ENCODE measurements at regions of chr1 and their contacts with region 1.

Region 1: GRCh38 chr1:24893431-24893830 is 36.6 kb downstream of the RUNX3 start:
- DNase-seq: peak in 1 of 2 donors; percentile 25
- H3K4me3 ChIP-seq: no peak overlapping the region
- H3K27ac ChIP-seq: no peak overlapping the region
- H3K4me1 ChIP-seq: no peaks in the 10 kb centered on the region
- H3K27me3 ChIP-seq: no peaks in the 10 kb centered on the region
- CTCF ChIP-seq: no peak
- POLR2A ChIP-seq: no peak

Region 2: DNA sequence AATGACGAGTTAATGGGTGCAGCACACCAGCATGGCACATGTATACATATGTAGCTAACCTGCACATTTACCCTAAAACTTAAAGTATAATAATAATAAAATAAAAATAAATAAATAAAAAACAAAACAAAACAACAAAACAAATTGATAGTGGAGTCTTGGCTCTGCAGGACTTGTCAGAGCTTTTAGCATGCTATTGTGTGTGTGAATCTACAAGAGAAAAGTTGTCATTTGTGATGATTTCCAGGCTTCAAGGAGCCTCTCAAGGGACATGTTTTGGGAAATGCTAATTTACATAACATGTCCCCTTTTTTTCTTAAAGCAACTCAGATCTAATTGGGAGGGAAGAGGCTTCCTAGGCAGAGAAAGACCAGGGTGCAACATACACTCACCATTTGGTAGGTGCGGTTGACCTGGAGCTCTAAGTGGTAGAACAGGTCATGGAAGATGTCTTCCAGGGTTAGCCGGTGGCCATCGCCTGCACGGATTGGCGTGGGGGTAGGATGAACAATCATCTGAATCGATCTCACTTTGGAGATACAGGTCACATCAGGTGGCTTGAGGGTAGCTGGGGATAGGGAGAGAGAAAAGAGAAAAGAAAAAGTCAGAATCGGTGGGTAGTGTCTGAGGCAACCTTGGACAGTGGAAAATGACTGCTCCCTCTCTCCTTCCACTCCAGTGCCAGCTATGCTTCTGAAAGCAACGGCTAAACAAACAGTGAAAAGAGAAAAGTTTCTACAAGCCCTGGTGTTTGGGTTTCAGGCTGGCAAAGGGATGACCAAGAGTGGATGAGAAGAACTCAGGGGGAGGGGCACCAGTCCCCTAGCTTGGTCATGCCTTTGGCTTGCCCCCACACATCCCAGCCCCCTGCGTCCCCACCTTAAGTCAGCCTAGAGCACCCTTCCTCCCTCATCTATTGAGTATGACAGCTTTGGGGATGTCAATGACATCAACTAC is 759.3 kb before region 1 on chr1:
- intact Hi-C with region 1: loop called (anchors 5 kb)
- DNase-seq: no peak
- H3K4me3 ChIP-seq: no peak overlapping the region
- H3K27ac ChIP-seq: no peak overlapping the region
- H3K4me1 ChIP-seq: no peaks in the 10 kb centered on the region
- H3K27me3 ChIP-seq: no peaks in the 10 kb centered on the region
- CTCF ChIP-seq: no peak
- POLR2A ChIP-seq: no peak

Region 3: GRCh38 chr1:24391882-24392603 is 501.4 kb before region 1 on chr1:
- intact Hi-C with region 1: no loop called
- DNase-seq: peak in 1 of 2 donors; percentile 61
- H3K4me3 ChIP-seq: peak overlapping the region in 2 of 3 donors; percentile 2 to 15
- H3K27ac ChIP-seq: peak overlapping the region; percentile 82 to 86
- H3K4me1 ChIP-seq: no peaks in the 10 kb centered on the region
- H3K27me3 ChIP-seq: no peaks in the 10 kb centered on the region
- CTCF ChIP-seq: peak; percentile 60 to 87 (median 80)
- POLR2A ChIP-seq: no peak

Region 4: DNA sequence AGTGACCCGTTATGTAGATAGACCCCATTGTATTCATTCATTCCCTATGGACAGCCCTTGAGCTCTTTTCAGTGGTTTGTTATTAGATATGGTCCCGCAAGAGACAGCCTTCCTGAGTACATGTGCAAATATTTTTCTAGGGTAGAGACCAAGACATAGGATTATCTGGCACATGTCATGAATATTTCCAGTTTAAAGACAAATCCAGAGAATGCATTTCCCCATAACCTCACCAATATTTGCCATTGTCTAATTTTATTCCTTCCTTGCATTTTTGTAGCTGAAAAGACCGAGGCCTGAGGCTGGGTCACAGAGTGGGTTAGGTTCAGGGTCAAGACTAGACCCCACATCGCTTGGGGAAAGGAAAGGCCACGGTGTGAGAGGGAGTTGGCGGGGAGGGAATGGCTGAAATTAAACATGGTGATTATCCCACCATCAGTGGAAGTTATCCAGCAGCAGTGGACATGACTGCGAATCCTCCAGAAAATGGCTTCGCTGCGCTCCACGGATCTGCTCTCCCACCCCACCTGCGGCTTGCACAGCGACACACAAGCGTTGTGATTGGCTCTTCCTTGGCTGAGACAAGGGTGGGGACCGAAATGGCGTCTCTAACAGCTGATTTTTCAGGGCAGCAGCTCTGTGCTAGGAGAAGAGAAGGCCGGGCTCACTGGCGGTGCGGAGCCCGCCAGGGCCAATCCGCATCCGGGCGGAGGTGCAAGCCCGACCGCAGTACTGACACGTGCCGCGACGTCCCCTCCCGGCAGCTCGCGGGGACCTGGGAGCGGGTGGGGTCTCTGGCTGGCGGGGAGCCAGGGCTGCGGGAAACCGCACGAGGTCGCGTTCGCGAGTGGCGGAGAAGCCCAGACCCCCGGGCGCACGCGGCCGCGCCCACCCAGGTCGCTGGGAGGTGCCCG is 1028.9 kb after region 1 on chr1:
- intact Hi-C with region 1: no loop called
- DNase-seq: no peak
- H3K4me3 ChIP-seq: peak overlapping the region; percentile 44 to 73 (median 60)
- H3K27ac ChIP-seq: peak overlapping the region; percentile 33 to 69
- H3K4me1 ChIP-seq: no peaks in the 10 kb centered on the region
- H3K27me3 ChIP-seq: peaks cover 0 to 5% of the 10 kb centered on the region in 2 donors
- CTCF ChIP-seq: no peak
- POLR2A ChIP-seq: no peak